PC-9 (cell line): ENCODE measurements at regions of chr14 and their contacts with region 1.

Region 1: GRCh38 chr14:99575043-99576023 is 28.7 kb downstream of the CCDC85C start:
- DNase-seq: peak; percentile 76 to 79
- H3K4me3 ChIP-seq: no peak overlapping the region; the same call in 1 of the 2 replicates
- H3K27ac ChIP-seq: peak overlapping the region; percentile 57
- H3K4me1 ChIP-seq: peaks cover 59% of the 10 kb centered on the region
- H3K27me3 ChIP-seq: no peaks in the 10 kb centered on the region
- CTCF ChIP-seq: no peak

Region 2: GRCh38 chr14:99518441-99519346 is 56.6 kb before region 1 on chr14:
- CTCF ChIA-PET with region 1: no interaction called
- POLR2A ChIA-PET with region 1: no interaction called
- intact Hi-C with region 1: no loop called
- DNase-seq: peak; percentile 35 to 51
- H3K4me3 ChIP-seq: no peak overlapping the region
- H3K27ac ChIP-seq: no peak overlapping the region
- H3K4me1 ChIP-seq: no peaks in the 10 kb centered on the region
- H3K27me3 ChIP-seq: no peaks in the 10 kb centered on the region
- CTCF ChIP-seq: peak; percentile 84

Region 3: DNA sequence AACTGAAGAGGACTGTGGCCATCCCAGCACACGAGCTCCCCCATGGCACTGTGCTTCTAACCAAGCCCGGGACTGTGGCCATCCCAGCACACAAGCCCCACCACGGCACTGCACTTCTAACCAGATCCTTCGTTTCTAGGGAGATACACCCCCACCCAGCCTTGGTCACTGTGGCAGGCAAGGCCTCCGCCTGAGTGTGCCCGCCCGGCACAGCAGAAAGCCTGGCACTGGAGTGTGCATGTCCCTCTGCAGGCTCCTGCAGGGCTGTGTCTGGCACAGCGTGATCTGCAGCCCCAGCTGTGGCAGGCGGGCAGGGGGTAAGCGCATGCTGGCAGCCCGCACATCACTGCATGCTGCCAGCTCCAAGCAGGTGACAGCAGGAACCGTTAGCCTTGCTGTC is 21.1 kb before region 1 on chr14:
- CTCF ChIA-PET with region 1: no interaction called
- POLR2A ChIA-PET with region 1: no interaction called
- intact Hi-C with region 1: no loop called
- DNase-seq: no peak
- H3K4me3 ChIP-seq: no peak overlapping the region
- H3K27ac ChIP-seq: no peak overlapping the region
- H3K4me1 ChIP-seq: peaks cover 7% of the 10 kb centered on the region
- H3K27me3 ChIP-seq: no peaks in the 10 kb centered on the region
- CTCF ChIP-seq: no peak

Region 4: DNA sequence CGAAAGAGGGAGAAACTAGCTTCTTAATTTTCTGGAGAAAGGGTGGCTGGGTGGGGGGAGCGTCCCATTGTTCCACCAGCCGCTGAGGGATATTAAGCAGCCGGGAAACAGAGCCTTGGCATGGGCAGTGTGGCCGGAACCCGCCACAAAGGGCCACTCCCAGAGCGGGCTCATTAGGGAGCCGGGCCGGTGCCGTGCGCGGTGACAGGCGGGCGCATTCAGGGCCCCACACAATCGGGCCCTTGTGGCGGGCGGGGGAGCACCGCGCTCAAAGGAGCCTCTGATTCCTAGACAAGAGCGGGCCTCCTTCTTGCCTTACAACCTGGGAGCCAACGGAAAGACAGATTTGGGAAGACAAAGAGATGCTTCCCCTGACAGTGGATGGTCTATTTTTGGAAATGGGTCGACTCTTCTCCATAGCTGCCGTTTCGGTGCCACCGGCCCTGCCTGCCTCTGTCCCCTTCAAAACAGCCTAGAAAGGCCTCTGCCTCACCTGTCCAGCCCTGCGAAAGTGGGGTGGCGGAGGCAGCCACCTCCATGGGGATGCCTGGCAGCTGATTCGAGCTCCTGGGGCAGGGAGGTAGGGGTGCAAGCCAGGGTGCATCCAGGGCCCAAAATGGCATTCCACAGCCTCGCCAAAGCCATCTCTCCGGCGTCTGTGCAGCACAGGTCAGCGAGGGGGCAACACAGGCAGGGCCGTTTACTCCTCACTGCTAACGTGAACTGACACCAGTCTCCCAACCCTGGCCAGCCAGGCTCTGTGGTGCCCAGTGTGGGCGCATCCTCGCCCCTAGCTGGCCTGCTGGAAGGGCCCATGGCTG is 17.8 kb after region 1 on chr14:
- CTCF ChIA-PET with region 1: no interaction called
- POLR2A ChIA-PET with region 1: no interaction called
- intact Hi-C with region 1: no loop called
- DNase-seq: no peak
- H3K4me3 ChIP-seq: no peak overlapping the region
- H3K27ac ChIP-seq: no peak overlapping the region
- H3K4me1 ChIP-seq: no peaks in the 10 kb centered on the region
- H3K27me3 ChIP-seq: no peaks in the 10 kb centered on the region
- CTCF ChIP-seq: no peak

Region 5: DNA sequence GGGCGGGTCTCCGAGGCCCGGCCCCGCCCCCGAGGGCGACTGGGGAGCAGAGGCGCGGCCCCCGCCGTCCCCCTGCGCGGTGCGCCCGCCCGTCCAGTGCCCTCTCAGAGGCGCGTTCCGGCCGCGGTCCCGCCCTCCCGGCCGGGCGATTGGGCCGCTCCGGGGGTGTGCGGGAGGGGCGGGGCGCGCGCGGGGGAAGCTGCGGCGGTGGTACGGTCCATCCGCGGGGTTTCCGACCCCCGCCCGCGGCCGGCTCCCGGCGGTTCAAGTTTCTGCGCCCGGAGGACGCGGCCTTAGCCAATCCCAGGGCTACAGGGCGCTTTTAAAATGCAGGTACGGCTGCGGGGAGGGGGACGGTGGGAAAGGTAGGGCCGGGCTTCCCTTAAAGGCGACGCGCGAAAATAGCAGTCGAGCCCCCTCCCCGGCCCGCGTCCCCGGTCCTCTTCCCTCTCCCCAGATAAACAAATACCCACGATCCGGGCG is 29.0 kb after region 1 on chr14:
- CTCF ChIA-PET with region 1: no interaction called
- POLR2A ChIA-PET with region 1: interaction called, 3 read pairs
- intact Hi-C with region 1: loop called (anchors 2 kb)
- DNase-seq: peak; percentile 72 to 87
- H3K4me3 ChIP-seq: peak overlapping the region; percentile 71
- H3K27ac ChIP-seq: peak overlapping the region; percentile 50
- H3K4me1 ChIP-seq: peaks cover 16% of the 10 kb centered on the region
- H3K27me3 ChIP-seq: no peaks in the 10 kb centered on the region
- CTCF ChIP-seq: no peak

Region 6: DNA sequence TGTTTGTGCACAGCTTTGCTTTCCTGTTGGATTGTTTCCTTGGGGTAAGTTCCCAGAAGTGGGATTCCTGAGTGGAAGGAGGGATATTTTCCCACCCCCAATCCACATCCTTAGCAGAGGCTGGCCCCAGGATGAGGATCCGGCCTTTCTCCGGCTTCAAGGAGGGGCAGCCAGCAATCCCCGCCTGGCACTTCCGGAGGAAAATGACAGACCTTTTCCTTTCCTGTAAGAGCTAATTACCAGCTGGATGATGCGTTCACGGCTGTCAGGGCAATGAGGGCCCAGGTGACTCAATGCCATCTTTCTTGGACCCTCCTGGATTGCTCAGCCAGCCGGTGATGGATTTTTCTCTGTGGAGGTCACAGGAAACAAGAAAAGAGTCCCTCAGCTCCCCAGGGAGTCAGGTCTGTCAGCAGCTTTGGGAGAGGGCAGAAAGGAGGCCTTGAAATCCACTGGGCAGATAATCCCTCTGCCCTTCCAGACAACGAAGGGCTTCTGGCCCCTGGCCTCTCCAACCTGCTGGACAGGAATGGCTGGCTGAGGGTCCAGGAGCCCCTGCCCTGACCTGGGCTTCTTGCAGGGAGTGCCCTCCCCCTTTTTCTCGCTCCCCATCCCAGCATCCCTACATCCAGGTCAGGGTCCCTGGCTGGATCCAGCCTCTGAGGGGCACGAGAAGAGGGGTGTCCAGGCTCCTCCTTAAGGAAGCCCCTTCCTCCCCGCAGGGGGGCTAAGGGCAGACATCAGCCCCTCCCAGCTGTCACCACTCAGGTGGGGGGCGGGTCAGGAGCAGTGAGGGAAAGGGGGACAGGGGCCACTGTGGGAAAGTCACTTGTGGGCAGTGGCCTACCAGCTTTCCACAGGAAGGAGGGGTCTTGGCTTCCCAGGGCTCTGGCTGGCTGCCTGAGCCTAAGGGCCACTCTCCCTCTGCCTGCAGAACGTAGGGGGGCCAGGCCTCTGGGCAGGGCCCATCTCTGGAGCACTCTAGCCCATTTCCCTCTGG is 44.8 kb after region 1 on chr14:
- CTCF ChIA-PET with region 1: no interaction called
- POLR2A ChIA-PET with region 1: no interaction called
- intact Hi-C with region 1: no loop called
- DNase-seq: no peak
- H3K4me3 ChIP-seq: no peak overlapping the region
- H3K27ac ChIP-seq: no peak overlapping the region
- H3K4me1 ChIP-seq: peaks cover 21% of the 10 kb centered on the region
- H3K27me3 ChIP-seq: no peaks in the 10 kb centered on the region
- CTCF ChIP-seq: no peak

Region 7: DNA sequence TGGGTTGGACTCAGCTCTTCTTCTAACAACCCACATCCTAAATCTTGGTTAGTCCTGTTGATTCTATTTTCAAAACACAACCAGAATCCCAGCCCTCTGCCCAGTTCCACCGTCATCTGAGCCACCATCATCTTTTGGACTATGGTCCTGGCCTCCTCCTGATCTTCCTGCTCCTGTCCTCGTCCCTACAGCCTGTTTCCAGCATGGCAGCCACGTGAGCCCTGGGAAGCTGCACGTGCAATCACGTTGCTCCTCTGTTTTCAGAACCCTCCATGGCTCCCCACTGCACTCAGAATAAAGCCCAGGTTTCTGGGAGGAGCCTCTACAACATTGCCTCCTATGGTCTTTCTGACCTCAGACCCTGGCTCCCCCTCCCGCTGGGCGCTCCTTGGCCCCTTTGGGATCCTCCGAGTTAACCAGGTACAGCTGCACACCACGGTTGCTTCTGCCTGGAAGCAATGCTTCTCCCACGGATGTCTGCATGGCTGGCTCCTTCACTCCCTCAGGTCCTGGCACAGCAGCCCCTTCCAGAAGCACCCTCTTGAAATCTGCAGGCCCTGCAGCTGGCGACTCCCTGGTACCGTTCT is 967.4 kb after region 1 on chr14:
- CTCF ChIA-PET with region 1: no interaction called
- POLR2A ChIA-PET with region 1: interaction called, 10 read pairs
- intact Hi-C with region 1: no loop called
- DNase-seq: no peak
- H3K4me3 ChIP-seq: no peak overlapping the region
- H3K27ac ChIP-seq: no peak overlapping the region
- H3K4me1 ChIP-seq: no peaks in the 10 kb centered on the region
- H3K27me3 ChIP-seq: no peaks in the 10 kb centered on the region
- CTCF ChIP-seq: no peak